ENCODE measurements at regions of chr22 and their contacts with region 1.

Region 1: GRCh38 chr22:32660292-32660691 is 141.2 kb upstream of the TIMP3 start:
- DNase-seq: peak in 6 of 10 donors; percentile 19 to 90 (median 52)

Region 2: GRCh38 chr22:32796865-32797573 is 136.7 kb after region 1 on chr22:
- intact Hi-C with region 1: loop called (anchors 1 kb)
- DNase-seq: peak in 9 of 10 donors; percentile 43 to 97 (median 78)

Measured in posterior cingulate gyrus (tissue), 11 donors.